ENCODE measurements at regions of chr12 and their contacts with region 1.

Region 1: DNA sequence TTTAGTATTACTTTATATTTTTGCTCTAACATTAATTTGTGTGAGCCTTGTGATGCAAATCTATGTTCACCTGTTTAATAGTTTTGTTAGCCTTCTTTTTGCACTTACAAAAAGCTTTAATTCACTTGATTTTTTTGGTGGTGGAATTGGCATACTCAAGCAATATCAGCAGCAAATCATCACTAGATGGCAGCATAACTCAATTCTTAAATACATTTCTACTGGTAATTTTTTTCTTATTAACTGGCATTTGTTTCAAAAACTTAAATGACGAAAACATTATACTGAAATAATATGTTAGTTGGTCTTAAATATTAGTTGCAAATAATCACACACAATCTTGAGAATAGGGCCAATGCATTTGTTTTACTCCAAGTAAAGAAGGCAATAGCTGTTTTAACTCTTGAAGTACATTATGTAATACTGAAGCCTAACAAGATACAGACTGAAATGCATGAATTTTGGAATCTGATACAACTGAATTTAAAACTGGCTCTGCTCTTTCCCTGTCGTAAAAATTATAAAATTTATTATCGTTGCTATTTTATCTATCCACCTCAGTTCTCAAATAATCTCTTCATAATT is 151.5 kb downstream of the ATXN7L3B start:
- DNase-seq: peak; percentile 69
- ATAC-seq: no peak
- H3K4me3 ChIP-seq: no peak overlapping the region
- H3K27ac ChIP-seq: no peak overlapping the region
- H3K4me1 ChIP-seq: no peaks in the 10 kb centered on the region
- H3K27me3 ChIP-seq: no peaks in the 10 kb centered on the region
- CTCF ChIP-seq: peak; percentile 63
- POLR2A ChIP-seq: no peak
- RAD21 ChIP-seq: peak; percentile 58

Region 2: GRCh38 chr12:74885775-74886174 is 196.6 kb after region 1 on chr12:
- CTCF ChIA-PET with region 1: no interaction called
- POLR2A ChIA-PET with region 1: interaction called, 11 read pairs
- dilution Hi-C with region 1: no loop called
- in situ Hi-C with region 1: no loop called
- intact Hi-C with region 1: no loop called
- DNase-seq: no peak
- ATAC-seq: no peak
- H3K4me3 ChIP-seq: no peak overlapping the region
- H3K27ac ChIP-seq: no peak overlapping the region
- H3K4me1 ChIP-seq: peaks cover 5% of the 10 kb centered on the region; the same call in 1 of the 2 replicates
- H3K27me3 ChIP-seq: no peaks in the 10 kb centered on the region
- CTCF ChIP-seq: no peak
- POLR2A ChIP-seq: no peak
- RAD21 ChIP-seq: no peak

Region 3: DNA sequence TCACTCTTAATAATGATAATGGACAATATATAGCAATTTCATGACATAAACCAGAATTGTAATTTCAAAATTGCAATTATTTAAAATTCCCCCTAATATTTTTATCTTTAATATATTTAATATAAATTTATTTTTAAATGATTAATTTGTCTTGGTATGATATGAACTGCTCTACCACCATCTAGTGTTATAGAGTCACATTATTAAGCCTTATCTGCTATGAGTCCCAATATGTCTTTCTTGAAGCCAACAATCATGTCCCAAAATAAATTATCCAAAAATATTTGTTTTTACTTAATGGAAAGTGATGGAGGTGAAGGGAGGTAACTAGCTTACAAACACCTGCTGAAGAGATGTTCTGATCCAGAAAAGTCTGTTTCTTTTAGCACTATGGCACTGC is 369.1 kb after region 1 on chr12:
- CTCF ChIA-PET with region 1: no interaction called
- POLR2A ChIA-PET with region 1: no interaction called
- dilution Hi-C with region 1: no loop called
- in situ Hi-C with region 1: no loop called
- intact Hi-C with region 1: loop called (anchors 10 kb)
- DNase-seq: peak; percentile 2
- ATAC-seq: no peak
- H3K4me3 ChIP-seq: no peak overlapping the region
- H3K27ac ChIP-seq: no peak overlapping the region
- H3K4me1 ChIP-seq: no peaks in the 10 kb centered on the region
- H3K27me3 ChIP-seq: no peaks in the 10 kb centered on the region
- CTCF ChIP-seq: peak; percentile 22; the same call in 1 of the 2 replicates
- POLR2A ChIP-seq: no peak
- RAD21 ChIP-seq: peak; percentile 21; the same call in 1 of the 2 replicates

Region 4: DNA sequence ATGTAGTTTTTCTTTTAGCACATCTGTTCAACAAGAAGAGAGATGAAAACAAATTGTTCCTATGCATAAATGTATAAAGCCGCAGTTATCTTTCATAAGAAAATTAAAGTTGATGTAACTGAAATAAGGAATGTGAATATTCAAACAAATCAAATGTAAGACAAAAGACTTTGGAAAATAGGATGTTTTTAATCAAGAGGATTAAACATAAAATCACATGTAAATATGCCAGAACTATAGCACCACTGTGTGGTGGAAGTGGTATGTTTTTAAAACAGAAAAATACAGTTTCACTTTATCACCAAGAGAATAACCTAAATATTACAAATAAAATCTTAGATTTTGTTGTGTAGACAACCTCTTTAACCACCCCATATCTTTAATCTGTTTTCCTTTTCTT is 600.6 kb after region 1 on chr12:
- CTCF ChIA-PET with region 1: no interaction called
- POLR2A ChIA-PET with region 1: no interaction called
- dilution Hi-C with region 1: no loop called
- in situ Hi-C with region 1: loop called (anchors 25 kb)
- intact Hi-C with region 1: loop called (anchors 2 kb)
- DNase-seq: peak; percentile 31
- ATAC-seq: 0 out of 2 replicates have a peak, but pooled peaks have one; percentile 51
- H3K4me3 ChIP-seq: no peak overlapping the region
- H3K27ac ChIP-seq: no peak overlapping the region
- H3K4me1 ChIP-seq: no peaks in the 10 kb centered on the region
- H3K27me3 ChIP-seq: no peaks in the 10 kb centered on the region
- CTCF ChIP-seq: peak; percentile 54
- POLR2A ChIP-seq: no peak
- RAD21 ChIP-seq: peak; percentile 68

Region 5: DNA sequence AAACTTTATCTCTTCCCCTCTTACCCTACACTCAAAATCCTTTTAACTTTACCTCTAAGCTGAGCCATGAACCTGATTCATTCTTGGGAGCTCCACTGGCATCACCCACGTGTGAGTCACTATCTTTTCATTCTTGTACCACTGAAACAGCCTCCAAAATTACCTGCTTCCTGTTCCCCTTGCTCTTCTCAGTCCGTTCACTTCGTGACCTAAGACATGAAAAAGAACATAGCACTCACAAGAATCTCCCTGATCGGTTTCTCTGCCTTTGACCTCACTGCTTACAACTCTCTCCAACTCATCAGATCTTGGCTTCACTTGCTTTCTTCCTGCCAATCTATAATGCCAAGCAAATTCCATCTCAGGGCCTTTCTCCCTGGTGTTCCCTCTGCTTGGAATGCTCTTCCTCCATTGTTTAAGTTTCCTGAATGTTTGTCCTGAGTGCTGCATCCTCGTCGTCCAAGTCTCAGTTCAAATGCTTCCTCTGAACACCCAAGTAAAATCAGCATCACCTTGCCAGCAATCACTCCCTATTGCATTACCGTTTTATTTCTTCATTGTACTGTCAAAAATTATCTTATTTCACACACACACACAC is 800.5 kb after region 1 on chr12:
- CTCF ChIA-PET with region 1: interaction called, 3 read pairs
- POLR2A ChIA-PET with region 1: no interaction called
- dilution Hi-C with region 1: no loop called
- in situ Hi-C with region 1: no loop called
- intact Hi-C with region 1: loop called (anchors 5 kb)
- DNase-seq: peak; percentile 63
- ATAC-seq: peak; percentile 31
- H3K4me3 ChIP-seq: no peak overlapping the region
- H3K27ac ChIP-seq: peak overlapping the region; percentile 13; the same call in 1 of the 2 replicates
- H3K4me1 ChIP-seq: peaks cover 7% of the 10 kb centered on the region
- H3K27me3 ChIP-seq: no peaks in the 10 kb centered on the region
- CTCF ChIP-seq: no peak
- POLR2A ChIP-seq: no peak
- RAD21 ChIP-seq: no peak

Region 6: GRCh38 chr12:75505706-75506312 is 816.6 kb after region 1 on chr12:
- CTCF ChIA-PET with region 1: no interaction called
- POLR2A ChIA-PET with region 1: no interaction called
- dilution Hi-C with region 1: no loop called
- in situ Hi-C with region 1: loop called (anchors 10 kb)
- intact Hi-C with region 1: loop called (anchors 1 kb)
- DNase-seq: peak; percentile 67
- ATAC-seq: peak; percentile 59
- H3K4me3 ChIP-seq: no peak overlapping the region
- H3K27ac ChIP-seq: no peak overlapping the region
- H3K4me1 ChIP-seq: peaks cover 1% of the 10 kb centered on the region; the same call in 1 of the 2 replicates
- H3K27me3 ChIP-seq: no peaks in the 10 kb centered on the region
- CTCF ChIP-seq: peak; percentile 75
- POLR2A ChIP-seq: no peak
- RAD21 ChIP-seq: peak; percentile 66

Measured in IMR-90 (cell line).